Endothelial cell of umbilical vein (primary cell): ENCODE measurements at regions of chr1 and their contacts with region 1.

Region 1: DNA sequence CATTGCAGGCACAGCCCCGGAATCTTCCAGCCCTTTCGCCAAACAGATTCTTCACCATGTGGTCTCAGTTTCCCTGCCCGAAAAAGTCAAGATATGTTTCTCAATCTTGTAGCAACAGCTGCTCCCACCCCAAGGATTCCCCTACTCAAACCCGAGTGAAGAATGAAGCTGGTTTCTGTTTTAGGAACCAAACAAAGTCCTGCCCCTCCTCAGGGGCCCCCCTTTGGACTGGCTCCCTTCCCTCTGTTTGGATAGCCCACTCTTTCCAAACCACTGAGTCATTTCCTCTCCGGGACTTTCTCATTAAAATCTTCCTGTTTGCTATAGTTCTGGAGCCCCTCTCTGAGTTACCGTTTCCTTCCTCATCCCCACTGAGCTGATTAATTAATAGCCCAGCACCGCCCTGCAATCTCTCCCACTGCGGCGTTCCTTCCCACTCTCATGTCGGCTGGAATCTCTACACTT is 100.9 kb downstream of the TSEN15 start:
- DNase-seq: peak; percentile 93
- H3K4me3 ChIP-seq: peak overlapping the region; percentile 40 to 81 (median 74)
- H3K27ac ChIP-seq: peak overlapping the region; percentile 79
- H3K4me1 ChIP-seq: peaks cover 29% of the 10 kb centered on the region
- H3K27me3 ChIP-seq: peaks cover 0 to 3% of the 10 kb centered on the region in 2 experiments
- CTCF ChIP-seq: no peak
- POLR2A ChIP-seq: no peak

Region 2: GRCh38 chr1:184127520-184127919 is 24.9 kb before region 1 on chr1:
- CTCF ChIA-PET with region 1: no interaction called
- POLR2A ChIA-PET with region 1: no interaction called
- dilution Hi-C with region 1: no loop called
- intact Hi-C with region 1: no loop called
- DNase-seq: no peak
- H3K4me3 ChIP-seq: no peak overlapping the region
- H3K27ac ChIP-seq: no peak overlapping the region
- H3K4me1 ChIP-seq: no peaks in the 10 kb centered on the region
- H3K27me3 ChIP-seq: no peaks in the 10 kb centered on the region
- CTCF ChIP-seq: no peak
- POLR2A ChIP-seq: no peak

Region 3: DNA sequence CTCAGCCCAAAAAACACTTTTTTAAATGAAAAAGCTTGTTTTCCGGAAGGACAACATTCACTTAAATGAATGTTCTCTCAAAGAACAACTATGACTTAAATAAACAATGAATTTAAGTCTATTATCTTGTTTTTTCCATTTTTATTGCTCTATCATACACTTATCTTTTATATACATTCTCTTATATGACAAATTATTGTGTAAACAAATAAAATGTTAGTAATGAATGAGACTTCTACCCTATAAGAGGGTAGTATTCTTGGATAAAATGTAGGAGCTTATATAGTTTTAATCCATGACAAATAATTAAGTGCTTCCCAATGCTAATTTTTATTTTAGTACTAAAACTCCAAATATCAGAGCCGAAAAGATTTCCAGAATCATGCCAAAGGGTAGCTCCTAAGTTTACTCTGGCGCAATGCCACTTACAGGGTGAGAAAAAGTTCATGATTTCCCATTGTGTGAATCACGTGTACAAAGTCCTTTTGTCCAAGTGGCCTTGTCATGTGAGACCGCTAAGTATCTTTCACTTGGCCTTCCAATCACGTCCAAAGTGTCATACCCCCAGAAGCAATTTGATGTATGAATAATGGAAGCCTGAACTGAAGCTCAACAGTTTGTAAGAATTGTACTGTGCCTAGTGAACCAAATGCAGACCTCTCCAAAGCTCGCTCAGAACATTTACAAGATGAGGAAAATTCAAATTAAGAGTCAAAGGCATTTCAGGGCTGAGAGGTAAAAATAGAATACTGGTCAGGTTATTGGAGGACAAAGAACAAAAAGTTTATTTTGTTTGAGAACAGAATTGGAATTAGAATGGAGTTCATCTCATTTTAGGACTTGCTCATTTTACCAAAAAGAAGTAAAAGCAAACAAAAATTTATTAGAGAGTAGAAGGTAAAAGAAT is 177.7 kb after region 1 on chr1:
- CTCF ChIA-PET with region 1: no interaction called
- POLR2A ChIA-PET with region 1: no interaction called
- dilution Hi-C with region 1: no loop called
- intact Hi-C with region 1: loop called (anchors 5 kb)
- DNase-seq: peak; percentile 97
- H3K4me3 ChIP-seq: no peak overlapping the region
- H3K27ac ChIP-seq: no peak overlapping the region
- H3K4me1 ChIP-seq: peaks cover 22% of the 10 kb centered on the region
- H3K27me3 ChIP-seq: peaks cover 5 to 7% of the 10 kb centered on the region in 2 experiments
- CTCF ChIP-seq: no peak
- POLR2A ChIP-seq: no peak